Right cardiac atrium (tissue), 5 donors: ENCODE measurements at regions of chr1 and their contacts with region 1.

Region 1: GRCh38 chr1:212477014-212477679 is 44.4 kb downstream of the NENF start:
- DNase-seq: peak; percentile 75 to 88 (median 84)
- ATAC-seq: peak; percentile 91
- H3K4me3 ChIP-seq: no peak overlapping the region
- H3K27ac ChIP-seq: no peak overlapping the region
- H3K4me1 ChIP-seq: no peaks in the 10 kb centered on the region
- H3K27me3 ChIP-seq: no peaks in the 10 kb centered on the region

Region 2: GRCh38 chr1:212558693-212559480 is 81.7 kb after region 1 on chr1:
- intact Hi-C with region 1: loop called in 3 of 4 experiments (anchors 10 kb)
- DNase-seq: peak; percentile 92 to 97 (median 97)
- ATAC-seq: peak; percentile 96 to 97
- H3K4me3 ChIP-seq: peak overlapping the region; percentile 58
- H3K27ac ChIP-seq: peak overlapping the region; percentile 73
- H3K4me1 ChIP-seq: no peaks in the 10 kb centered on the region
- H3K27me3 ChIP-seq: no peaks in the 10 kb centered on the region

Region 3: GRCh38 chr1:212566522-212567479 is 89.7 kb after region 1 on chr1:
- intact Hi-C with region 1: loop called in 2 of 4 experiments (anchors 10 kb)
- DNase-seq: peak in 2 of 3 donors; percentile 27 to 52
- ATAC-seq: peak; percentile 82 to 89
- H3K4me3 ChIP-seq: peak overlapping the region; percentile 76
- H3K27ac ChIP-seq: peak overlapping the region; percentile 56
- H3K4me1 ChIP-seq: peaks cover 1% of the 10 kb centered on the region
- H3K27me3 ChIP-seq: no peaks in the 10 kb centered on the region

Region 4: GRCh38 chr1:212608209-212608955 is 131.2 kb after region 1 on chr1 and contains the start of gene ATF3:
- intact Hi-C with region 1: loop called in 1 of 4 experiments (anchors 10 kb)
- DNase-seq: peak; percentile 100
- ATAC-seq: peak; percentile 96 to 98
- H3K4me3 ChIP-seq: peak within 1 kb of the TSS; percentile 91
- H3K27ac ChIP-seq: peak within 1 kb of the TSS; percentile 95
- H3K4me1 ChIP-seq: peaks cover 6% of the 10 kb centered on the region
- H3K27me3 ChIP-seq: no peaks in the 10 kb centered on the region
- total RNA-seq, gene ATF3: 6.9 to 24.4 (median 7.9) TPM

Region 5: DNA sequence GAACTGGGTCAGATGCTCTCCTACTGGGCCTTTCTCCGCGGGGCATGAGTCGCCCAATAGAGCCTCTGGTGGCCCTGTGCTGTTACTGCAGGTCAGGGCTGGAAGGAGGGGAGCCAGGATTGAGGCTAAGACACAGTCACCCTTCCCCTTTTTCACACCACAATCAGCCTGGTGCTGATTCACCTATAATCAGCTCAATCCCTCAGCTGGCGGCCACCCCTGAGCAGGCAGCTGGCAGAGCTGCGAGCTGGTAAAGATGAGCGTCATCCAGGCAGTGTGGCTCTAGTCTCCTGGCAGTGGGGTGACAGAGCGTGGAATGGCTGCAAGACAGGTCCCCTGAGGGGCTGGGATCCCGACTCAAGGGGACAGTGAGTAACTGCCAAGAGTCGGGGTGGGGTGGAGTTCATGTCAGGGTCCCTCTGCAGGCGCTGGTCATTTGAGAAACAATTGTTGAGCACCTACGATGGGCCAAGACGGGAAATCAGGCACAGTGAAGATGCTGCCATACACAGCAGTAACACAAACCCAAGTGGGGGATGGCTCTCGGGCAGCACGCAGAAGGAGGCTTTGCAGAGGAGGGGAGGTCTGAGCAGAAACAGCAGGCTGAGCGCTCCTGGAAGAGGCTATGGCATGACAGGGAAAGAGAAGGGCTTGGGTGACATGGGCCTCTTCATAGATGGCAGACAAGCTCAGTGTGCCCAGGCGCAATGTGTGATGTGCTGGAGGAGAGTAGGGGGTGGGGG is 153.2 kb after region 1 on chr1:
- intact Hi-C with region 1: loop called in 2 of 4 experiments (anchors 2 to 5 kb)
- DNase-seq: peak; percentile 44 to 82 (median 76)
- ATAC-seq: peak; percentile 86 to 88
- H3K4me3 ChIP-seq: no peak overlapping the region
- H3K27ac ChIP-seq: no peak overlapping the region
- H3K4me1 ChIP-seq: peaks cover 4% of the 10 kb centered on the region
- H3K27me3 ChIP-seq: no peaks in the 10 kb centered on the region

Region 6: GRCh38 chr1:212782422-212783154 is 305.4 kb after region 1 on chr1:
- intact Hi-C with region 1: loop called in 3 of 4 experiments (anchors 10 kb)
- DNase-seq: no peak
- ATAC-seq: peak; percentile 14 to 26
- H3K4me3 ChIP-seq: no peak overlapping the region
- H3K27ac ChIP-seq: no peak overlapping the region
- H3K4me1 ChIP-seq: no peaks in the 10 kb centered on the region
- H3K27me3 ChIP-seq: no peaks in the 10 kb centered on the region